ENCODE measurements at regions of chr5 and their contacts with region 1.

Region 1: DNA sequence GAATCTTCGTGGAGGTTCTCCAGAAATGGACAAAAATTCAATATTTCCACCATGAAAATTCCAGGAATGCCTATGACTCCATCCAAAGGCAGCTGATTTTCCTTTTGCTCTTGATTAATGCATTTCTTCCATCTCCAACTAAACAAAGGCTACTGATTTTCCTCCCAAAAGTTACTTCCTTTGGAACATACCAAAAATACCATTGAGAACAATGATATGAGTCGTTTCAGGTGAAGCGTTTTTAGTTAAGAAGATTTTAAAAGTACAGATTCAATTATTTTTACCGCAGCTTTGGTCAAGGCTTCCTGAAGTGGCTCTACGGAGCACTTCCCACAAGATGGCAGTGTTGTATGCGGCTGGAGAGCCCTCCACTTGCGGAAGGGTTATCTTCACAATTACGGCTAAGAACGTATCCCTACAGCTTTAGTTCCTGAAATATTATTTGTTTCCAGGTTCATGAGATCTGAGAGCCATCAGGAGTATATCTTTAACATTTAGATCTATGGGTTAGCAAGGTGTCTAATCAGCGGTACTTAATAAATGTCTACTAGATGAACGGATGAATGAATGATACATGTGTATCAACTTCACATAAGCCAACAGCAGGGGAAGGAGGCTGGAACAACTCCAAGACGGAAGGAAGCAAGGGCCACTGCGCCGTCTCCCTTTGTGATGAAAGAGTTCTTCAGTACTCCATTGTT is 35.9 kb upstream of the ARSB start:
- DNase-seq: peak in 5 of 9 experiments; percentile 18 to 54 (median 33)
- ATAC-seq: peak; percentile 38
- H3K4me3 ChIP-seq: no peak overlapping the region
- H3K4me3 Mint-ChIP-seq: no peak overlapping the region
- H3K27ac ChIP-seq: no peak overlapping the region
- H3K27ac Mint-ChIP-seq: no peak overlapping the region
- H3K4me1 ChIP-seq: no peaks in the 10 kb centered on the region
- H3K4me1 Mint-ChIP-seq: peaks cover 11% of the 10 kb centered on the region
- H3K27me3 ChIP-seq: peaks cover 0 to 5% of the 10 kb centered on the region in 2 experiments
- H3K27me3 Mint-ChIP-seq: peaks cover 45% of the 10 kb centered on the region
- CTCF ChIP-seq: peak; percentile 35

Region 2: DNA sequence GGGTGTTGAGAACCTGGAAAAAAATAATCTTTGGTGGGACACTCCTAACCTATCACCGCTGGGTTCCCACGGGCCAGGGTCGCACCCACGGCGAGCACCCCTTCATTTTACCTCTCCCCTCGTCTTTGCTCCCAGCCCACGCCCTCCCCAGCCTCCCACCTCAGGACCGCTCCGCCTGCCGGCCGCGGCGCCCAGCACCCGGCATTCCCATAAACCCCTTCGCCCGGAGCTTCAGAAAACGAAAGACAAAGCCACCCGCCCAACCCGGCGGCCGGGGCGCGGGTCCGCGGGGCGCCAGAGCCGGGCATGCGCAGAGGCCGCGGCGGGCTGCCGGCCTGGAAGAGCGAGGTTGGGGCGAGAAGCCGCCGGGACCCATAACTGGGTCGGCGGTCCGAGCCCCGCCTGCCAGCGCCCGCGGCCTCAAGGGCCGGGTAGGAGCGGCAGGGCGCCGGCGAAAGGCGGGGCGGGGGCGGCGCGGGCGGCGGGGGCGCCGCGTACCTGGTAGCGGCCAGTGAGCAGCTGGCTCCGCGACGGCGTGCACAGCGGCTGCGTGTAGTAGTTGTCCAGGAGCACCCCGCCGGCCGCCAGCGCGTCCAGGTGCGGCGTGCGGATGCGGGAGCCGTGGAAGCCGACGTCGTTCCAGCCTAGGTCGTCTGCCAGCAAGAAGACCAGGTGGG is 36.4 kb before region 1 on chr5:
- CTCF ChIA-PET with region 1: interaction called, 25 read pairs
- POLR2A ChIA-PET with region 1: no interaction called
- intact Hi-C with region 1: loop called in 1 of 2 experiments (anchors 2 kb)
- DNase-seq: peak; percentile 55 to 90 (median 75)
- ATAC-seq: peak; percentile 74
- H3K4me3 ChIP-seq: peak overlapping the region; percentile 54 to 68
- H3K4me3 Mint-ChIP-seq: peak overlapping the region; percentile 94
- H3K27ac ChIP-seq: peak overlapping the region; percentile 40 to 75
- H3K27ac Mint-ChIP-seq: peak overlapping the region; percentile 92
- H3K4me1 ChIP-seq: peaks cover 14% of the 10 kb centered on the region
- H3K4me1 Mint-ChIP-seq: peaks cover 28% of the 10 kb centered on the region
- H3K27me3 ChIP-seq: no peaks in the 10 kb centered on the region
- H3K27me3 Mint-ChIP-seq: no peaks in the 10 kb centered on the region
- CTCF ChIP-seq: no peak

Region 3: GRCh38 chr5:79042188-79042587 is 21.2 kb after region 1 on chr5:
- CTCF ChIA-PET with region 1: interaction called, 22 read pairs
- POLR2A ChIA-PET with region 1: no interaction called
- intact Hi-C with region 1: no loop called
- DNase-seq: no peak
- ATAC-seq: no peak
- H3K4me3 ChIP-seq: no peak overlapping the region
- H3K4me3 Mint-ChIP-seq: no peak overlapping the region
- H3K27ac ChIP-seq: no peak overlapping the region
- H3K27ac Mint-ChIP-seq: no peak overlapping the region
- H3K4me1 ChIP-seq: no peaks in the 10 kb centered on the region
- H3K4me1 Mint-ChIP-seq: no peaks in the 10 kb centered on the region
- H3K27me3 ChIP-seq: no peaks in the 10 kb centered on the region
- H3K27me3 Mint-ChIP-seq: peaks cover 11% of the 10 kb centered on the region
- CTCF ChIP-seq: no peak

Region 4: DNA sequence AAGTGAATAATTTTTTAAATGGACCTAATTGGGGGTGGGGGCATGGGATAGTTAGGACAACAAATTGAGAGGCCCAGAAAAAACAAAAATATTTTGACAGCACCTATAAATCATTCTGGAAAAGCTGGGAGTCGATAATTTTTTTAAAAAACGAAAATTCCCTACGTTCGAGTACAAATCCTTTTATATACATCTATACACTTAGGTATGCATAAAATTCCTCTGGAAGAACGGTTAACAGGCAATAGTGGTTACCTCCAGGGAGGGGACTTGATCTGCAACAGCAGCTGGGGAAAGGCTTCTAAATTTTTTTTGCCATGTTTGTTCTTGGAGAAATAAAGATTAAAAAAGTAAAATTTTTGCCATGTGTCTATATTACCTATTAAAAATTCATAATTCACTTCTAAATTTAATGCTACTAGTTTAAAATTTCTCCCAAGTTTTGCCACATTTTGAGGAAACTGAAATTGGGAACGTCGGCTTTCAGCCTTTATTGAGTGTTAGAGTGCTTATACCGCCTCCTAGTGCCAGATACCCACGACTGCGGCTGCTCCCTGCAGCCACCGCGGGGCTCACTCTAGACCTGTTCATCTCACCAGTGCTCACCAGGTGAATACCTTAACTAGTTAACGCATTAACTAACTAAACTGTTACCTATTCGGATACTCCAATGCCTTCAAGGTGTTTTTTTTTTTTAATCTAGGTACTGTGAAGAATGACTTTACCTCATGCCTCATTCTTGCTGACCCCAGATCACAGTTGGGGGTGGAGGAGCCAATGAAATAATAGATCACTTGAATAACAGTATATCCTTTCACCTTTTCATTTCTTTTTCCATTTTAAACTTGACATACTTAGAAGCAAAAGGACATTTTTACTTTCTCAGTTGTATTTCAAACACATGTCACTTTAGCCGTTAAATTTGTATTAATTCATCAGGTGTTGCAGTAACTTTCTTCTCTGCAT is 88.8 kb after region 1 on chr5:
- CTCF ChIA-PET with region 1: interaction called, 9 read pairs
- POLR2A ChIA-PET with region 1: no interaction called
- intact Hi-C with region 1: loop called (anchors 2 kb)
- DNase-seq: peak in 6 of 9 experiments; percentile 1 to 52 (median 32)
- ATAC-seq: no peak
- H3K4me3 ChIP-seq: no peak overlapping the region
- H3K4me3 Mint-ChIP-seq: no peak overlapping the region
- H3K27ac ChIP-seq: no peak overlapping the region
- H3K27ac Mint-ChIP-seq: no peak overlapping the region
- H3K4me1 ChIP-seq: no peaks in the 10 kb centered on the region
- H3K4me1 Mint-ChIP-seq: peaks cover 2% of the 10 kb centered on the region
- H3K27me3 ChIP-seq: peaks cover 0 to 8% of the 10 kb centered on the region in 2 experiments
- H3K27me3 Mint-ChIP-seq: peaks cover 40% of the 10 kb centered on the region
- CTCF ChIP-seq: peak; percentile 69

Region 5: DNA sequence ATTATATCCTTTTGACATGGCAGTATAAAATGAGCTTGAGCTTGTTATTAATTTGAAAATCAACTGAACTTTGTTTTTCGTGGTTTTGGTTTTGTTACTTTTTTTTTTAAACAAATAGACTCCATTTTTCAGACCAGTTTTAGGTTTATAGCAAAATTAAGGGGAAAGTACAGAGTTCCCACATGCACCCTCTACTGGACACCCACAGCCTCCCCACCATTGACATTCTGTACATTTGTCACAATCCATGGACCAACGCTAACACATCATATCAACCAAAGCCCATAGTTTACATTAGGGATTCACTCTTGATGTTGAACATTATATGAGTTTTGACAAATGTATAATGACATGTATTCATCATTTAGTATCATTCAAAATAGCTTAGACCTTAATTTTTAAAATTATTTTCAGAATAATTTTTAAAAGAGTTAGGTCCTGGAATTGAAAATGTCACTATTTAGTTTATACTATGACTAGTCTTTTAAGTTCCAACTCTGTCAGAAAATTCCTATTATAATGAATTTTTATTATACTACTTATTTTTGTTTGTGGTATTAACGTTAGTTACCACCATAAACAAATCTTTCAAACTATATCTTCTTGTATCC is 179.7 kb after region 1 on chr5:
- CTCF ChIA-PET with region 1: no interaction called
- POLR2A ChIA-PET with region 1: no interaction called
- intact Hi-C with region 1: no loop called
- DNase-seq: peak in 3 of 9 experiments; percentile 18 to 32 (median 19)
- ATAC-seq: no peak
- H3K4me3 ChIP-seq: no peak overlapping the region
- H3K4me3 Mint-ChIP-seq: no peak overlapping the region
- H3K27ac ChIP-seq: no peak overlapping the region
- H3K27ac Mint-ChIP-seq: no peak overlapping the region
- H3K4me1 ChIP-seq: no peaks in the 10 kb centered on the region
- H3K4me1 Mint-ChIP-seq: no peaks in the 10 kb centered on the region
- H3K27me3 ChIP-seq: no peaks in the 10 kb centered on the region
- H3K27me3 Mint-ChIP-seq: no peaks in the 10 kb centered on the region
- CTCF ChIP-seq: peak; percentile 16

Region 6: GRCh38 chr5:79535477-79536192 is 514.6 kb after region 1 on chr5:
- CTCF ChIA-PET with region 1: no interaction called
- POLR2A ChIA-PET with region 1: no interaction called
- intact Hi-C with region 1: loop called (anchors 2 to 5 kb)
- DNase-seq: peak in 2 of 9 experiments; percentile 15 to 24
- ATAC-seq: no peak
- H3K4me3 ChIP-seq: no peak overlapping the region
- H3K4me3 Mint-ChIP-seq: no peak overlapping the region
- H3K27ac ChIP-seq: no peak overlapping the region
- H3K27ac Mint-ChIP-seq: no peak overlapping the region
- H3K4me1 ChIP-seq: no peaks in the 10 kb centered on the region
- H3K4me1 Mint-ChIP-seq: no peaks in the 10 kb centered on the region
- H3K27me3 ChIP-seq: no peaks in the 10 kb centered on the region
- H3K27me3 Mint-ChIP-seq: peaks cover 8% of the 10 kb centered on the region
- CTCF ChIP-seq: peak; percentile 28

Region 7: DNA sequence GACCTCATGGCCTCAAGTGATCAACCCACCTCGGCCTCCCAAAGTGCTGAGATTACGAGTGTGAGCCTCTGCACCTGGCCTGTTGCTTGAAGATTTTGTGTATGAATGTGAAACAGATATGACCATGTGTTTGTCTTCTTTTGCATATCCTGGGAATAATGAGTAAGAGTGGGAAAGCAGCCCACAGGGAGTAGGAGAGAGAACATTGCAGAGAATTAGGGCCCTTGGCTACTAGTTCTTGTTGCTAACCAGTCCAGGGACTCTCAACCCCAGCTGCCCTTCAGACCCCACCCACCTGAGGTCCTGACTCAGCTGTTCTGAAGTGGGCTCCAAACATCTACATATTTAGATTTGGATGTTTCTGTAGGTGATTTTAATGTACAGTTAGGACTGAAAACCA is 844.6 kb after region 1 on chr5:
- CTCF ChIA-PET with region 1: no interaction called
- POLR2A ChIA-PET with region 1: no interaction called
- intact Hi-C with region 1: loop called in 1 of 2 experiments (anchors 5 kb)
- DNase-seq: no peak
- ATAC-seq: no peak
- H3K4me3 ChIP-seq: no peak overlapping the region
- H3K4me3 Mint-ChIP-seq: no peak overlapping the region
- H3K27ac ChIP-seq: no peak overlapping the region
- H3K27ac Mint-ChIP-seq: no peak overlapping the region
- H3K4me1 ChIP-seq: no peaks in the 10 kb centered on the region
- H3K4me1 Mint-ChIP-seq: no peaks in the 10 kb centered on the region
- H3K27me3 ChIP-seq: no peaks in the 10 kb centered on the region
- H3K27me3 Mint-ChIP-seq: peaks cover 21% of the 10 kb centered on the region
- CTCF ChIP-seq: no peak

Measured in CD8-positive, alpha-beta T cell (primary cell).